ENCODE measurements at regions of chr11 and their contacts with region 1.

Region 1: GRCh38 chr11:128290106-128290840 is 297.1 kb downstream of the ETS1 start:
- DNase-seq: peak; percentile 80
- ATAC-seq: peak; percentile 92
- H3K4me3 ChIP-seq: peak overlapping the region; percentile 53
- H3K27ac ChIP-seq: peak overlapping the region; percentile 75
- H3K4me1 ChIP-seq: peaks cover 25% of the 10 kb centered on the region
- H3K27me3 ChIP-seq: no peaks in the 10 kb centered on the region
- CTCF ChIP-seq: peak; percentile 71 to 89 (median 85)
- EP300 ChIP-seq: peak; percentile 10 to 24; a peak in 1 of 4 replicates
- POLR2A ChIP-seq: peak; percentile 43
- RAD21 ChIP-seq: peak; percentile 99

Region 2: DNA sequence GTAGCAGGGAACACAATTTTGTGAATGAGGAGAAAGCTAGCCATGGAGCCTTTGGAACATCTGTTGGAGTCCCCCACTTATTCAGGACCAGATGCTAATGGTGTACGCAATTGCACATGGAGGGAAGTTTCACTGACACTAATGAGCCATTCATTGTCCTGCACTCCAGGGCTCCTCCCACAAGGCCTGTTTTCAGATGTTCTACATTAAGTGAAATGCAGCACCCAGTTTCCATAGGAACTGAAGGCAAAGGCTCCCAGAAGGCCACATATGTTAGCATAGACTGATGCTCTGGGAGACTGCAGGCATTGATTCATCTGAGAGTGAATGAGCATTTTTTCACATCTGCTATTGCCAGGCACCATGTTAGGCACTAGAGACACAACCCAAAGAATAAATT is 102.4 kb before region 1 on chr11:
- CTCF ChIA-PET with region 1: no interaction called
- POLR2A ChIA-PET with region 1: no interaction called
- RAD21 ChIA-PET with region 1: no interaction called
- SMC1A ChIA-PET with region 1: no interaction called
- in situ Hi-C with region 1: no loop called
- intact Hi-C with region 1: no loop called
- DNase-seq: no peak
- ATAC-seq: no peak
- H3K4me3 ChIP-seq: no peak overlapping the region
- H3K27ac ChIP-seq: no peak overlapping the region
- H3K4me1 ChIP-seq: no peaks in the 10 kb centered on the region
- H3K27me3 ChIP-seq: no peaks in the 10 kb centered on the region
- CTCF ChIP-seq: no peak
- EP300 ChIP-seq: no peak
- POLR2A ChIP-seq: no peak
- RAD21 ChIP-seq: no peak

Region 3: GRCh38 chr11:128302425-128303186 is 12.3 kb after region 1 on chr11:
- CTCF ChIA-PET with region 1: interaction called, 35 read pairs
- POLR2A ChIA-PET with region 1: no interaction called
- RAD21 ChIA-PET with region 1: interaction called, 17 read pairs
- SMC1A ChIA-PET with region 1: interaction called, 72 read pairs
- in situ Hi-C with region 1: no loop called
- intact Hi-C with region 1: no loop called
- DNase-seq: peak; percentile 82
- ATAC-seq: peak; percentile 89
- H3K4me3 ChIP-seq: no peak overlapping the region
- H3K27ac ChIP-seq: peak overlapping the region; percentile 35; the same call in 1 of the 2 replicates
- H3K4me1 ChIP-seq: peaks cover 62% of the 10 kb centered on the region
- H3K27me3 ChIP-seq: no peaks in the 10 kb centered on the region
- CTCF ChIP-seq: 0 out of 6 replicates have a peak, but pooled peaks of 1 of the 3 experiments have one; percentile 11
- EP300 ChIP-seq: peak; percentile 6 to 8; a peak in 1 of 4 replicates
- POLR2A ChIP-seq: no peak
- RAD21 ChIP-seq: no peak

Region 4: GRCh38 chr11:128399251-128400121 is 109.2 kb after region 1 on chr11:
- CTCF ChIA-PET with region 1: interaction called, 12 read pairs
- POLR2A ChIA-PET with region 1: no interaction called
- RAD21 ChIA-PET with region 1: interaction called, 3 read pairs
- SMC1A ChIA-PET with region 1: interaction called, 8 read pairs
- in situ Hi-C with region 1: no loop called
- intact Hi-C with region 1: no loop called
- DNase-seq: peak; percentile 26
- ATAC-seq: peak; percentile 93
- H3K4me3 ChIP-seq: no peak overlapping the region
- H3K27ac ChIP-seq: no peak overlapping the region; the same call in 1 of the 2 replicates
- H3K4me1 ChIP-seq: peaks cover 8% of the 10 kb centered on the region
- H3K27me3 ChIP-seq: no peaks in the 10 kb centered on the region
- CTCF ChIP-seq: no peak
- EP300 ChIP-seq: 0 out of 4 replicates have a peak, but pooled peaks of 1 of the 2 experiments have one; percentile 31
- POLR2A ChIP-seq: no peak
- RAD21 ChIP-seq: no peak

Region 5: DNA sequence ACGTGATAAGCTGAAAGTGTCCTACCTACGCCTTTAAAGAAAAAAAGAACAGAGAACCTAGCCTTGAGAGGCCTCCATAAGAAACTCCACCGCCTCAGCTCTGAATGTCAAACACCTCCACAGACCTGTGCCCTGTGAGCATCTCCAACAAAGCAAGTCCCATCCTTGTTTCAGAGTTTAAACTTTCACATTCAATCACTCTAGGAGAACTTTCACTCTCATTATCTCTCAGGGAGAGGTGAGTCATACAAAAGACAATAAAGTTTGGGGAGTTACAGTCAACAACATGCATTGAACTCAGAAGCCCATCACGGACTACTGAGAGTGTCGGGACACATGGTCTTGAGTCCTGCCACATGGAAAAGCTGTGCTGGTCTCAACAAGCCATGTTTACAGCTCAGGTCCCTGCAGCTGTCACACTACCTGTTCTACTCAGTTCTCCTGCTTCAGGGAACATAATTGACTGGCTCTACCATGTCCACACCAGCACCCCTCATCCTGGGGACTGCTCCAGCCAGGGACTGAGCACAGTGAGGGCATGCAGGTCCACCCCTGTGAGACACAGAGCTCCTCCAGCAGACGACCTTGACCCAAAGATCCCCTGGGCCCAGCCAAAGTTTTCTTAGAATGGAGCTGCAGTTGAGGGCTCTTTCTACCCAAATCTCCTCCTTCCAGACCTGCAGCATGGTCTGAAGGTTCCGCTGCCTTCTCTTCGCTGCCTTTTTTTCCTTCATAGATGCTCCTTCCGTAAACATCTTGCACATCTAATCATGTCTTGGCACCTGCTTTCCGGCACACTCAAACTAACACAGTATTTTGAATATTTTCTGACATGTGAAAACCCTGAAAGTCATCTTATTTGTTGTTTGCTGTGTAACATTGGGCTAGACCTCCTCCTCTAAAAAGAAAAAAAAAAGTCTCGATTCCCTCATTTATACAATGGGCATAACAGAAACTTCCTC is 182.1 kb after region 1 on chr11:
- CTCF ChIA-PET with region 1: interaction called, 11 read pairs
- POLR2A ChIA-PET with region 1: interaction called, 4 read pairs
- RAD21 ChIA-PET with region 1: interaction called, 18 read pairs
- SMC1A ChIA-PET with region 1: interaction called, 21 read pairs
- in situ Hi-C with region 1: loop called (anchors 25 kb)
- intact Hi-C with region 1: loop called (anchors 1 kb)
- DNase-seq: peak; percentile 93
- ATAC-seq: peak; percentile 78
- H3K4me3 ChIP-seq: peak overlapping the region; percentile 41; the same call in 1 of the 2 replicates
- H3K27ac ChIP-seq: peak overlapping the region; percentile 91
- H3K4me1 ChIP-seq: peaks cover 92% of the 10 kb centered on the region
- H3K27me3 ChIP-seq: no peaks in the 10 kb centered on the region
- CTCF ChIP-seq: no peak
- EP300 ChIP-seq: peak; percentile 76 to 78; a peak in 3 of 4 replicates
- POLR2A ChIP-seq: peak; percentile 75
- RAD21 ChIP-seq: peak; percentile 25; the same call in 1 of the 2 replicates

Region 6: GRCh38 chr11:128610721-128611617 is 320.7 kb after region 1 on chr11:
- CTCF ChIA-PET with region 1: interaction called, 5 read pairs
- POLR2A ChIA-PET with region 1: no interaction called
- RAD21 ChIA-PET with region 1: no interaction called
- SMC1A ChIA-PET with region 1: interaction called, 6 read pairs
- in situ Hi-C with region 1: no loop called
- intact Hi-C with region 1: loop called (anchors 5 kb)
- DNase-seq: peak; percentile 93
- ATAC-seq: peak; percentile 97
- H3K4me3 ChIP-seq: peak overlapping the region; percentile 55
- H3K27ac ChIP-seq: peak overlapping the region; percentile 98
- H3K4me1 ChIP-seq: peaks cover 36% of the 10 kb centered on the region
- H3K27me3 ChIP-seq: no peaks in the 10 kb centered on the region
- CTCF ChIP-seq: no peak
- EP300 ChIP-seq: peak; percentile 42 to 86; a peak in 3 of 4 replicates
- POLR2A ChIP-seq: peak; percentile 69
- RAD21 ChIP-seq: no peak; the same call in 1 of the 2 replicates

Region 7: DNA sequence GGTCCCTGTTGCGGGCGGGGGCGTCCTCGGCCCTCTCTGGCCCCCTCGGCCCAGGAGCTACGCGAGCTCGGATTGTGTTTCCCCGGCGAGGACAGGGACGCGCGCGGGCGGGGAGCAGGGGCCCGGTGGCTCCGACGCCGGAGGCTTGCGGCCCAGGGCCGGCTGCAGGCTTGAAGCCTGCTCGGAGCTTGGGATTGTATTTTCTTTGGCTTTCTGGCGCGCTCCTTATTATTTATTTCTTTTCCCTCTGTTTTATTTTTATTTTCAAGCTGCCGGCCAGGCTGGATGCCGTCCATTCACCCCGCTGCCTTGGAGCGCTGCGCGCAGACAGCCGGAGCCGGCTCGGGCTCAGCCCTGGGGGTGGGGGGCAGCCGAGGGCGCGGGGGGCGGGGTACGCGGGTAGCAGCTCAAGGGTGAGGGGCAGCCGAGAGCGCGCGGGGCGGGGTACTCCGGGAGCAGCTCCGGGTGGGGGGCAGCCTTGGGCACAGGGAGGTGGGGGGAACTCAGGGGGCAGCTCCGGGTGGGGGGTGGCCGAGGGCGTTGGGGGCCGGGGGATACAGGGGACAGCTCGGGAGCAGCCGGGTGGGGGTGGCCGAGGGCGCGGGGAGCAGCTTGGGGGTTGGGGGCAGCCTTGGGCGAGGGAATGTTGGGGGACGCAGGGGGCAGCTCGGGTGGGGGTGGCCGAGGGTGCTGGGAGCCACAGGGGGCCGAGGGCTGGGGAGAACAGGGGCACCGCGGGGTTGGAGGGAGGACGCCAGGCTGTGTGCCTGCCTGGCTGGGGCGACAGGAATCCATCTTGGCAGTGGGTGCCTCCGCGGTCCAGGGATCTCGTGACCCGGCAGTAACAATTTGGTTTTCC is 534.1 kb after region 1 on chr11:
- CTCF ChIA-PET with region 1: interaction called, 34 read pairs
- POLR2A ChIA-PET with region 1: no interaction called
- RAD21 ChIA-PET with region 1: interaction called, 32 read pairs
- SMC1A ChIA-PET with region 1: interaction called, 21 read pairs
- in situ Hi-C with region 1: loop called (anchors 5 kb)
- intact Hi-C with region 1: no loop called
- DNase-seq: no peak
- ATAC-seq: no peak
- H3K4me3 ChIP-seq: no peak overlapping the region
- H3K27ac ChIP-seq: no peak overlapping the region
- H3K4me1 ChIP-seq: no peaks in the 10 kb centered on the region
- H3K27me3 ChIP-seq: no peaks in the 10 kb centered on the region
- CTCF ChIP-seq: no peak
- EP300 ChIP-seq: no peak
- POLR2A ChIP-seq: no peak
- RAD21 ChIP-seq: no peak

Measured in GM12878 (cell line).